GM10248 (cell line): ENCODE measurements at regions of chr19 and their contacts with region 1.

Region 1: DNA sequence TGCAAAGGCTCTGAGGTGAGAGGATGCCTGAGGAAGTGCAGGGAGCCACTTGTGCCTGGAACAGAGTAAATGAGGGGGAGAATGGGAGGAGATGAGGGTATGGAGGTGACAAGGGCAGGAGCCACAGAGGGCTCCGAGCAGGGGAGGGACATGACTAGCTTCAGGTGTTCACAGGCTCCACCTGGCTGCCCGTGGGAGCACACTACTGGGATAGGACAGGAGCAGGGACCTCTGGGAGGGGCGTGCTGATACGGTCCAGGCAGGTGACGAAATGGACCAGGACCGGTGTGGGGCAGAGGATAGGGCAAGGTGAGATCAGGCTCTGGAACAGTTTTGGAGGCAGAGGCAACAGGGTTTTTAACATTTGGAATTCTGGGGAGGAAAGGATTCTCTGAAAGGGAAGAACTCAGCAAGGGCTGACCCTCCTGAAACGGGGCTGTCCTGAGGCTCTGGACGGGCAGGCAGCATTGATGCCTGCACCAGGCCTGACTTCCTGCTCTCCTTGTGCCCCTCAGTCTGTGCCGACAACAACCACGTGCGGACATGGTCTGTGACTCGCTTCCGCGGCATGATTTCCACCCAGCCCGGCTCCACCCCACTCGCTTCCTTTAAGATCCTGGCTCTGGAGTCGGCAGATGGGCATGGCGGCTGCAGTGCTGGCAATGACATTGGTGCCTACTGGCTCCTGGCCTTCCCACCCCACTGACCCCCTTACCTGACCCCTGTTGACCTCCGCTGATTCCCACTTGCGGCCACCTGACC is 11.6 kb downstream of the SHKBP1 start:
- DNase-seq: no peak
- CTCF ChIP-seq: no peak

Region 2: GRCh38 chr19:40529093-40529954 is 59.0 kb before region 1 on chr19:
- CTCF ChIA-PET with region 1: no interaction called
- POLR2A ChIA-PET with region 1: no interaction called
- DNase-seq: peak; percentile 99
- CTCF ChIP-seq: peak; percentile 86

Region 3: DNA sequence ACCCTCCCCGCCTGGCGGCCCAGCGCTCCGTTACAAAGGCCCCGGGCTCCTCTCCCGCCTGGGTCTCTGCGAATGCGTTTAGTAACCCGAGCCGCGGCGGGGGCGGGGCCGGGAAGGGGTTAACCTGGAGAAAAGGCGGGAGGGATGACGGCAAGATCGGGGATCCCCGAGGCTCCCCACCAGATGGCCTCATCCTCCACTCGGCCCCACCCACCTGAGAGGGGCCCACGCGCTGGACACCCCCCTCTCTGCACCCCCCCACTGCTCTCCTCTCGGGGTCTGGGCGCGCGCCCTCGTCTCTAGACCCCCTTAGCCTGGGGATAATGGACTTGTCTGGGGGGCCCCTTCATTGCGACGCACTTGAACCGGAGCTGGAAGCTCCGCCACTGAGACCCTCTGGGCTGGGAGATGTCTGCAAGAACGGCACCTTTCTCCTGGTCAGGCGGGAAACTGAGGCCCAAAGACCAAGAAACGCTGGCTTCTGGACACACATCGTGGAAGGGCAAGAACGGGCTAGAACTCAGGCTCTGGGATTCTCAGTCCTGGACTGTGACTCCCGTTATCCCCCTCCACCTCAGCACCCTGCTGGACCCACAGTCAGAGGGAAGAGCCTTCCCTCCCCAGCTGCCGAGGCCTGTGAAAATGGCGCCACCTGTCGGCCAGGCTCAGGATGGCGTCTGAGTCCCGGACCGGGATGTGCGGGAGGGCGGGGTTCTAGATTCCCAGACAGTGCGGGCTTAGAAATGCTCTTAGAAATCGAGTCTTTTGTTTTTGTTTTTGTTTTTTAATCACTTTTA is 10.0 kb after region 1 on chr19:
- CTCF ChIA-PET with region 1: interaction called, 16 read pairs
- POLR2A ChIA-PET with region 1: no interaction called
- DNase-seq: peak; percentile 86
- CTCF ChIP-seq: peak; percentile 98